Activated naive CD4-positive, alpha-beta T cell treated with anti-CD3 and anti-CD28 coated beads for 36 hours (primary cell): ENCODE measurements at regions of chr5 and their contacts with region 1.

Region 1: DNA sequence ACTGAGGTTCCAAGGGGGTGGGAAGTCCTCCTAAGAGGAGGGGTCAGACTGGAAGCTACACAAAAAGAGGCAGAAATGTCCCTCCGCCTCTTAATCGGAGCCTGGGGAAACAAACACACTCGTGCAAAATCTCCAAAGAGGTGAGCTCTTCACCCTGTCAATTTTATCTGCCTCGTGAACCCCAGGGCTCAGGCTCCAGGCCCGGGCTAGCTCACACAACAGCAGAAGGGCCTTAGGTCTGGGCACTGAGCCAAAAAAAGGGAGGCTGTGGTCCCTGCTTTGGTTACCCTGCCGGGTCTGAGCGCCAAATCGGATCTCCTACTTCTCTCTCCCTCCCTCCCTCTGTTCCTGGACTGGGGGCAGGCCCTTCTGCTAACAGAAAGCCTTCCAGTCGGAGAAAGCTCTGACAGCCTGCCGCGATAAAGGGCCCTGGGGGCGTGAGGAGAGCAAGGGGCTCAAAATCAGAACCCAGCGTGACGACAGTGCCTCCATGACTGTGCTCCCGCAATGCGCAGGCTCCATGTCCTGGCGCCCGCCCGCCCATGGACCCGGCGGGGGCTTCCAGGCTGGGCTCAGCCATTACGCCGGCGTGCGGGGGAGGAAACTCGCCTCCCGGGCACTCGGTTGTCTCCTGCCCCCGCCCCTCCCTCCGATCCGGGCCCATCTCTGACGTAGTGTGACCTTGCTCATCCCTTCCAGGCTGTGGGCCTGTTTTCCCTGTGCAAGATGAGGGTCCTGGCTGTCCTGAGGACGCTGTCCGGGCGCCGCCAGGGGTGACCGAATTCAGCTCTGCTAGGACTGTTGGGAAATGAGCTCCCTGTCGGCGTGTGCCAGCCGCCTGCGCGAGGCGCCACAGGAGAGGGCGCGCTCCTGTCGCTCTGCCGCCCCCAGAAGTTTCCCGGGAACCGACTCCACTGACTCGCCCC is 865 bp upstream of the SLC22A4 start:
- DNase-seq: peak; percentile 92
- H3K4me3 Mint-ChIP-seq: peak overlapping the region; percentile 92
- H3K27ac Mint-ChIP-seq: peak overlapping the region; percentile 89
- H3K4me1 Mint-ChIP-seq: peaks cover 23% of the 10 kb centered on the region
- H3K27me3 Mint-ChIP-seq: peaks cover 14% of the 10 kb centered on the region

Region 2: DNA sequence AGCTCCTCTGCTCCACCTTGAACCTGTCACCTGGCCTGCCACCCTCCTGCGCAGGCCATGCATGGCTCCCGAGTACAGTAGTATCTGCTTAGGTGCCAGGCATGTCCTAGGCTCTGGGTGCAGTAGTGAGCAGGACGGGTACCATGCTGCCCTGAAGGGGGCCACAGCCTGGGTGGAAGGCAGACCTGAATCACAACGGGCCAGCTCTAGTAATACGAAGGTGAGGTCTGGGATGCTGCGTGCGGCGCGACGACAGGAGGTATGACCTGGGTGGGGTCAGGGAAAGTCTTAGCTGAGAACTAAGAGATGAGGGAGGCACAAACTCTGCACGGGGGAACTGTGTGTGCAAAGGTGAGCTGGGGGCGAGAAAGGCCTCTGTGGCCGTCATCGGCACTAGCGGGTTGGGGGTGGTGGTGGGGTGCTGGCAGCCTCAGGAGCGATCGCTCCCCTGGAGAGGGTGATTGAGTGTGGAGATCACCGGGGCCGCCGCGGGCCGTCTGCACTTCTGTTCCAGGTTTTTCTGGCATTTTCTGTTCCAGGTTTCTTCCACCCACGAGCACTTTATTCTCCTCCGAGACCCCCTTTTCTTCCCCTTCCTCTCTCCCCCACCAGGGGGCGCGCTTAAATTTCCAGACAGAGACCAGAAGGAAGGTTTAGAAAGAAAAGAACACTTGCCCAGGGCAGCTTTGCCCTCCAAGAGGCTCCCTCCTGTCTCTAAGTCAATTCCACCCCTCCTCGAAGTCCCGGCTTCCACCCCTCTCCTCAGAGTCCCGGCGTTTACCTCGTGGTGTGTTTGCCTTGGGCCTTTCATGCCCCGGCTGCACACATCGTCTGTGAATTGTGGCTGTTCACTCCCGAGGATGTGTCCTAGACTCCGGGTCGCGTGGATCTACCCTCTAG is 20.8 kb before region 1 on chr5:
- CTCF ChIA-PET with region 1: interaction called, 10 read pairs
- intact Hi-C with region 1: loop called (anchors 1 kb)
- DNase-seq: peak; percentile 82
- H3K4me3 Mint-ChIP-seq: no peak overlapping the region
- H3K27ac Mint-ChIP-seq: no peak overlapping the region
- H3K4me1 Mint-ChIP-seq: peaks cover 12% of the 10 kb centered on the region
- H3K27me3 Mint-ChIP-seq: peaks cover 20% of the 10 kb centered on the region

Region 3: GRCh38 chr5:132426525-132427138 is 133.3 kb after region 1 on chr5:
- CTCF ChIA-PET with region 1: no interaction called
- intact Hi-C with region 1: loop called (anchors 2 kb)
- DNase-seq: peak; percentile 83
- H3K4me3 Mint-ChIP-seq: peak overlapping the region; percentile 46
- H3K27ac Mint-ChIP-seq: peak overlapping the region; percentile 95
- H3K4me1 Mint-ChIP-seq: peaks cover 94% of the 10 kb centered on the region
- H3K27me3 Mint-ChIP-seq: no peaks in the 10 kb centered on the region

Region 4: GRCh38 chr5:132556763-132557477 is 263.6 kb after region 1 on chr5 and contains the start of gene RAD50:
- CTCF ChIA-PET with region 1: no interaction called
- intact Hi-C with region 1: loop called (anchors 2 kb)
- DNase-seq: peak; percentile 96
- H3K4me3 Mint-ChIP-seq: peak within 1 kb of the TSS; percentile 98
- H3K27ac Mint-ChIP-seq: peak within 1 kb of the TSS; percentile 94
- H3K4me1 Mint-ChIP-seq: peaks cover 15% of the 10 kb centered on the region
- H3K27me3 Mint-ChIP-seq: no peaks in the 10 kb centered on the region
- total RNA-seq, gene RAD50: 39.1 to 42.4 TPM

Region 5: GRCh38 chr5:132736853-132737833 is 443.8 kb after region 1 on chr5 and contains the start of gene KIF3A:
- CTCF ChIA-PET with region 1: no interaction called
- intact Hi-C with region 1: loop called (anchors 5 kb)
- DNase-seq: peak; percentile 99
- H3K4me3 Mint-ChIP-seq: peak within 1 kb of the TSS; percentile 84
- H3K27ac Mint-ChIP-seq: peak within 1 kb of the TSS; percentile 50
- H3K4me1 Mint-ChIP-seq: peaks cover 27% of the 10 kb centered on the region
- H3K27me3 Mint-ChIP-seq: no peaks in the 10 kb centered on the region
- total RNA-seq, gene KIF3A: 5.0 to 6.1 TPM

Region 6: GRCh38 chr5:132753135-132753987 is 460.0 kb after region 1 on chr5:
- CTCF ChIA-PET with region 1: no interaction called
- intact Hi-C with region 1: loop called (anchors 1 kb)
- DNase-seq: peak; percentile 52
- H3K4me3 Mint-ChIP-seq: no peak overlapping the region
- H3K27ac Mint-ChIP-seq: no peak overlapping the region
- H3K4me1 Mint-ChIP-seq: peaks cover 35% of the 10 kb centered on the region
- H3K27me3 Mint-ChIP-seq: no peaks in the 10 kb centered on the region